WTC11 (cell line): ENCODE measurements at regions of chr6 and their contacts with region 1.

Region 1: GRCh38 chr6:30143780-30144179 is 7.8 kb downstream of the TRIM40 start:
- DNase-seq: no peak
- ATAC-seq: no peak
- H3K4me3 Mint-ChIP-seq: no peak overlapping the region
- H3K27ac Mint-ChIP-seq: no peak overlapping the region
- H3K4me1 Mint-ChIP-seq: peaks cover 4% of the 10 kb centered on the region
- H3K27me3 Mint-ChIP-seq: peaks cover 31% of the 10 kb centered on the region
- CTCF ChIP-seq: no peak

Region 2: GRCh38 chr6:29956518-29956917 is 187.3 kb before region 1 on chr6:
- CTCF ChIA-PET with region 1: no interaction called
- POLR2A ChIA-PET with region 1: interaction called, 11 read pairs
- DNase-seq: no peak
- ATAC-seq: no peak
- H3K4me3 Mint-ChIP-seq: no peak overlapping the region
- H3K27ac Mint-ChIP-seq: no peak overlapping the region
- H3K4me1 Mint-ChIP-seq: no peaks in the 10 kb centered on the region
- H3K27me3 Mint-ChIP-seq: peaks cover 10% of the 10 kb centered on the region
- CTCF ChIP-seq: no peak